Upper lobe of right lung (tissue), 1 donor: ENCODE measurements at regions of chr10 and their contacts with region 1.

Region 1: GRCh38 chr10:122112625-122113160 is 123.7 kb downstream of the TACC2 start:
- DNase-seq: peak; percentile 93
- ATAC-seq: peak; percentile 94
- H3K4me3 ChIP-seq: peak overlapping the region; percentile 63
- H3K27ac ChIP-seq: peak overlapping the region; percentile 99
- H3K4me1 ChIP-seq: peaks cover 26% of the 10 kb centered on the region
- H3K27me3 ChIP-seq: no peaks in the 10 kb centered on the region
- CTCF ChIP-seq: peak; percentile 56

Region 2: DNA sequence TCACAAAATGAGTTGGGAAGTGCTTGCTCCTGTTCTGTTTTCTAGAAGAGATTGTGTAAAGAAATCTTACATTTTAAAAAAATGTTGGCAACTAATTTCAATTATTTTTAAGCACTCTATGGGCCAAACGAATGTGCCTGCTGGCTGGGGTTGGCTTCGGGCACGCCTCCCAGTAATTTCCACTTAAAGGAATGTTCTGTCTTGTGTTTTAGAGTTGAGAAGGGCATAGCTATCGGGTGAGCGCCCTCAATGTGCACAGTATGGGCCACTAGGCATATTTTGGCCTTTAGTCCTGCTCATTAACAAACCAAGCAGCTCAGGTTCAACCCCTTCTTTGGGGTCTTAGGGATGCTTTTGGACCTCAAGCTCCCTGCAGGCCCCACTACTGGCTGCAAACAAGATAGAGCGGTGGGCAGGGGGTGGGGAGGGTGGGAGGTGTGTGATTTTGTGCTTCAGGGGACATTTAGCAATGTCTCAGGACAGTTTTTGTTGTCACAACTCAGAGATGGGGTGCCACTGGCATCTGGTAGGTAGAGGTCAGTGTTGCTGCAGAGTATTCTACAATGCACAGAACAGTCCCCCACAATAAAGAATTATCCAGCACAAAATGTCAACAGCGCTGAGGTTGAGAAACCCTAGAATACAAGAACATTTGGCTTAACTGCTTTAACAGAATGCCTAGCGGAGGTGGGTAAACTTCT is 83.0 kb before region 1 on chr10:
- intact Hi-C with region 1: no loop called
- DNase-seq: no peak
- ATAC-seq: peak; percentile 67
- H3K4me3 ChIP-seq: no peak overlapping the region
- H3K27ac ChIP-seq: peak overlapping the region; percentile 1
- H3K4me1 ChIP-seq: peaks cover 8% of the 10 kb centered on the region
- H3K27me3 ChIP-seq: no peaks in the 10 kb centered on the region
- CTCF ChIP-seq: no peak

Region 3: GRCh38 chr10:122051251-122051996 is 61.3 kb before region 1 on chr10:
- intact Hi-C with region 1: loop called (anchors 10 kb)
- DNase-seq: peak; percentile 76
- ATAC-seq: peak; percentile 75
- H3K4me3 ChIP-seq: no peak overlapping the region
- H3K27ac ChIP-seq: peak overlapping the region; percentile 11
- H3K4me1 ChIP-seq: peaks cover 5% of the 10 kb centered on the region
- H3K27me3 ChIP-seq: no peaks in the 10 kb centered on the region
- CTCF ChIP-seq: peak; percentile 74

Region 4: DNA sequence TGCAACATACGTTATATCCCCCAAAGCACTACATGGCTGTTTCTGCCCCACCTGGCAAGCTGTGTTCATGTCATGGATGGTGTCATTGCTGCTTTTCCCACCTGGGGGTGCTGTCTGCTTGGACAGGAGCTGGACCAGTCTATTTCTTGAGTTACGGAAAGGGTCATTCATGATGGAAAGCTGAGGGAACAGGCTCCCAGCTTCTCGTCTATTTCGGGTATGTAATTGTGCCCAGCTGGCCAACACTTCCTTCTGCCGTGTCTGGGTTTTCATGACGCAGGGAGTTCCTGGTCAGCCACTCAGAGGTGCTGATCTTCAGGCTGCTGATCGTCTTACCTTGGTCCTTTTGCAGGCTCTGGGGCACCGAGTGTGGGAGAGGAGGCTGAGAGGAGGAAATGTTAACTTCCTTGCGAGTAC is 167.0 kb after region 1 on chr10:
- intact Hi-C with region 1: no loop called
- DNase-seq: no peak
- ATAC-seq: peak; percentile 31
- H3K4me3 ChIP-seq: no peak overlapping the region
- H3K27ac ChIP-seq: no peak overlapping the region
- H3K4me1 ChIP-seq: no peaks in the 10 kb centered on the region
- H3K27me3 ChIP-seq: no peaks in the 10 kb centered on the region
- CTCF ChIP-seq: peak; percentile 41